Activated CD4-positive, alpha-beta memory T cell treated with anti-CD3 and anti-CD28 coated beads for 36 hours (primary cell): ENCODE measurements at regions of chr3 and their contacts with region 1.

Region 1: DNA sequence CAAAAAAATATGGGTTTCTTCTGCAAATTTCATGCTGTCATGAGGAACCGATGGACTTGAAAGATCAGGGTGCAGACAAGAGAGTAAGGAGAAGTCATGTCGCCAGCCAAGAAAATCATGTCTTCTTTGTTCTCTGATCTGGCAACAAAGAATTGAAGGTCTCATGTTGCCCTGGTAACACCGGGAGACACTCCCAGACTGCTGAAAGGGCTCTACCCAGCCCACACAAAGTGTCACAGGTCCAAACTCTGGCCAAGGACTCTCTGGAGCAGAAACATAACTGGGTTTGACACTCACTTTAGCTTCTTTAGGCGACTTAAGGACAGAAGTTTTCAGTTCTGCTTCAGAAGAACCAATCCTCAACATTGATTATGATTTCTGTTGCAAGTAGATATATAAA is 42.9 kb downstream of the SIDT1 start:
- DNase-seq: no peak
- H3K4me3 Mint-ChIP-seq: no peak overlapping the region
- H3K27ac Mint-ChIP-seq: no peak overlapping the region
- H3K4me1 Mint-ChIP-seq: peaks cover 5% of the 10 kb centered on the region
- H3K27me3 Mint-ChIP-seq: no peaks in the 10 kb centered on the region

Region 2: GRCh38 chr3:113097960-113098447 is 477.2 kb before region 1 on chr3:
- CTCF ChIA-PET with region 1: no interaction called
- POLR2A ChIA-PET with region 1: no interaction called
- intact Hi-C with region 1: no loop called
- DNase-seq: no peak
- H3K4me3 Mint-ChIP-seq: no peak overlapping the region
- H3K27ac Mint-ChIP-seq: no peak overlapping the region
- H3K4me1 Mint-ChIP-seq: peaks cover 6% of the 10 kb centered on the region
- H3K27me3 Mint-ChIP-seq: no peaks in the 10 kb centered on the region

Region 3: DNA sequence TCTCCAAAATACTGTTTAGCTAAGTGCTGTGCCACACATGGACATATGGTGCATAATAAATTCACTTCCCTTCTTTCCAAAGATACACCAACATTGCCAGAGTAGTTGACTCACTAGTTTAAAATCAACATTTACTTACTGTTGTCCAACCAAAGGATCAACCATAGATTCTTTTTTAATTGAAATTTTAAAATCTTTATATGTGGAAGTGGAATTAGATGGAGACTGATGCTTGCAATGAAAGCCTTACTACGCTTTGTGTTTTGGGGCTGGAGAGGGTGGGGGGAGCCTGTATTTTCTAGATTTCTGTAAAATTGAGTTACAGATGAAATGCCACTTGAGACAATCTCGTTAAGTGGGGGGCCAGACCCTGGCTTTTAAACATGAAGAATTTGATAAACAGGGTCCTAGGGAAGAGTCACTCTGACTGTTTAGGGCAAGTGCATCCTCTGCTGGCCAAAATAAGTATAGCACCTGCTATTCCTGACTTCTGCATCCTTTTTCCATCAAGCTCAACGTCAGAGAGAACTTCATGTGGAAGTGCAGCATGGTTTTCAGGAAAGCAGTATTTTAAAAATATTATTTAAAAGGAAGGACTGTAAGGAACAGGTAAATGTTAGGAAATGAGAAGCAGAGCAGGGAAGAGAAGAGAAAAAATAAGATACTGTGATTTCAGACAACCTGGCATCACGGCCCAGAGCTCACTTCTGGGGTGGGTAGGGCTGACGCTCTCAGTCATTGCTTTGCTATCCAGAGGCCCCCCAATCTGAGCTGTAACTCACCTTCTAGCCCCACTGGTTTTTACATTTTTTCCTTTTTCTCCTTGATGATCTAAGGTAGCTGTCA is 287.2 kb before region 1 on chr3:
- CTCF ChIA-PET with region 1: interaction called, 9 read pairs
- POLR2A ChIA-PET with region 1: no interaction called
- intact Hi-C with region 1: loop called (anchors 5 kb)
- DNase-seq: peak; percentile 55
- H3K4me3 Mint-ChIP-seq: no peak overlapping the region
- H3K27ac Mint-ChIP-seq: no peak overlapping the region
- H3K4me1 Mint-ChIP-seq: peaks cover 3% of the 10 kb centered on the region
- H3K27me3 Mint-ChIP-seq: no peaks in the 10 kb centered on the region

Region 4: DNA sequence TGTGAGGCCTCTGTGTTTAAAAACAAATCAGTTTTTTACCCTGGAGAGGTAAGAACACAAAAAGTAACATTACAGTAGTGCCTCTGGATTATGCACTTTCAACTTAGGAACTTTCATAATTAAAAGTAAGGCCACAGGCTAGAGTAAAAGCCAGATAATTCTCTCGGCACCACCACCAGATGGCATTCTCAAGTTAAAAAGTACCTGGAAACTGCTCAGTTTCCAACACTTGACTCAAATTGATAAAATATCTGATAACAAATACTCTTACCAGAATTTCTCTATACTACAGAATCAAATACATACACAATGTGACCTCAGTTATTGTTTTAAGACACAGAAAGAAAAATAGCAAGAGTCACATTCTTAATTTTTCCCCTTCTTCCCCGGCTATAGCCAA is 80.2 kb before region 1 on chr3:
- CTCF ChIA-PET with region 1: interaction called, 130 read pairs
- POLR2A ChIA-PET with region 1: no interaction called
- intact Hi-C with region 1: loop called (anchors 1 kb)
- DNase-seq: peak; percentile 40
- H3K4me3 Mint-ChIP-seq: no peak overlapping the region
- H3K27ac Mint-ChIP-seq: no peak overlapping the region
- H3K4me1 Mint-ChIP-seq: peaks cover 3% of the 10 kb centered on the region
- H3K27me3 Mint-ChIP-seq: no peaks in the 10 kb centered on the region

Region 5: DNA sequence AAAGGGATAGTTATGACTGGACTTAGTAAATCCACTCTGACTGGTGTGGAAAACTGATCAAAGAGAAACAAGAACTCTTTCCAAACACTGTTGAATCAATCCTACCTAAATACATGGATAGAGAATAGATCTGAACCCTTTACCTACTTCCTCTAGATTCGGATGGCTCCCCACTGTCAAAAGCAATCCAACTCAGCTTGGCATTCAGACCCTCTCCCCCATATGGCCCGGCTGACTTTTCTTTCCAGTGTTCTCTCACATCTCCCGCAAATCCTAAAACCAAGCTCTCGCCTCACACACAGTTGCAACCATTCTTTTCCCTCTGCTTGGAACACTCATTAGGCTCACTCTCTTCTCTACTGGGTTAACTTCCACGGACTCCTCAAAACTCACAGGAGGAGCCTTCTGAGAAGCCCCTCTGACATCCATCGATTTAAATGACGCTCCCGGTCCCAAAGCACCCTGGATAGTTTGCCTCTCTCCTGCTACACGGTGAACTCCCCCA is 60.9 kb before region 1 on chr3:
- CTCF ChIA-PET with region 1: interaction called, 47 read pairs
- POLR2A ChIA-PET with region 1: interaction called, 4 read pairs
- intact Hi-C with region 1: loop called (anchors 1 kb)
- DNase-seq: no peak
- H3K4me3 Mint-ChIP-seq: no peak overlapping the region
- H3K27ac Mint-ChIP-seq: no peak overlapping the region
- H3K4me1 Mint-ChIP-seq: peaks cover 13% of the 10 kb centered on the region
- H3K27me3 Mint-ChIP-seq: peaks cover 18% of the 10 kb centered on the region

Region 6: DNA sequence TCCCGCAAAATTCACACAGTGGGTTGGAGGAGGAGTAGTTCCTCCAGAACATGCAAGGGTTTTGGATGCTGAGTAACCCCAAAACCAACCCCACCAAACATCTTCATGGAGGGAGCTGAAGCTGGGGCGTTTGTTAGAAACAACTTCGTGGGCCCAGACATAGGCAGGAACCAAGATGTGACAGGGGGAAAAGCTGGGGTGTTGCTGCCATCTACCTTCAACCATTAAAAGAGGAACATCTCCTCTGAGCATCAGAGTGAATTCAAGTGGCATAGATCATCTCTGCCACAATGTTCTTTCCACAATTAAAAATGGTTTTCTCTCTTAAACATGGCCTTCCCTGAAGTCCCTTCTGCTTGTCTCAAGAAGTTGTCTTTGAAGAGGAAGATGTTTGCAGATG is 22.4 kb before region 1 on chr3:
- CTCF ChIA-PET with region 1: interaction called, 11 read pairs
- POLR2A ChIA-PET with region 1: no interaction called
- intact Hi-C with region 1: no loop called
- DNase-seq: peak; percentile 26
- H3K4me3 Mint-ChIP-seq: no peak overlapping the region
- H3K27ac Mint-ChIP-seq: no peak overlapping the region
- H3K4me1 Mint-ChIP-seq: peaks cover 19% of the 10 kb centered on the region
- H3K27me3 Mint-ChIP-seq: no peaks in the 10 kb centered on the region

Region 7: GRCh38 chr3:113589971-113590370 is 14.8 kb after region 1 on chr3:
- CTCF ChIA-PET with region 1: interaction called, 24 read pairs
- POLR2A ChIA-PET with region 1: no interaction called
- intact Hi-C with region 1: no loop called
- DNase-seq: no peak
- H3K4me3 Mint-ChIP-seq: no peak overlapping the region
- H3K27ac Mint-ChIP-seq: no peak overlapping the region
- H3K4me1 Mint-ChIP-seq: no peaks in the 10 kb centered on the region
- H3K27me3 Mint-ChIP-seq: no peaks in the 10 kb centered on the region